Gastrocnemius medialis (tissue), 4 donors: ENCODE measurements at regions of chr11 and their contacts with region 1.

Region 1: GRCh38 chr11:55263081-55263480 is 1.1 kb downstream of the TRIM48 start:
- DNase-seq: no peak
- ATAC-seq: no peak
- H3K4me3 ChIP-seq: no peak overlapping the region
- H3K27ac ChIP-seq: no peak overlapping the region
- H3K4me1 ChIP-seq: no peaks in the 10 kb centered on the region
- H3K27me3 ChIP-seq: no peaks in the 10 kb centered on the region
- CTCF ChIP-seq: no peak
- POLR2A ChIP-seq: no peak

Region 2: DNA sequence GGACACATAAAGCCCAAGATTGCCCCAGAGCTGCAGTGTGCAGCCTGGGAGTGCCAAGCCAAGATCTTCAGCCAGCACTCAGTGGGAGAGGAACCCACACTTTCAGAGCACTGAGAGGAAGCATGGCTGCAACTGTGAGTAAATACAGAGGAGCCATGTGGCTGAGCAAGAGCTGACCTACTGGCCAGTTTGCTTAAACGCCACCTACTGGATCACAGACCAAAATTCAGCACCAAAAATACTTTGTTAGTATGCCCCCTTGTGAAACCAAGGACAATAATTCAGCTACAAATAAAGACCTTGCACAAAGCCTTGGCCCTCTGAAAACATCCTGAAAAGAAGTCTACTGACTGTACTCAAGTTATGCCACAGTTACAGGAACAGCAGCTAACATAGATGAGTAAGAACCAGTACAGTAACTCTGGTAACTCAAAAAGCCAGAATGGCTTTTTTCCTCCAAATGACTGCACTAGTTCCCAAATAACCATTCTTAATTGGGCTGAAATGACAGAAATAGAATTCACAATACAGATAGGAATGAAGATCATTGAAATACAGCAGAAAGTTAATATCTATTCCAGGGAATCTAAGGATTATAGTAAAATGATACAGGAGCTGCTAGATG is 94.6 kb after region 1 on chr11:
- in situ Hi-C with region 1: loop called in 1 of 4 experiments (anchors 25 kb)
- intact Hi-C with region 1: no loop called
- DNase-seq: no peak
- ATAC-seq: no peak
- H3K4me3 ChIP-seq: no peak overlapping the region
- H3K27ac ChIP-seq: no peak overlapping the region
- H3K4me1 ChIP-seq: no peaks in the 10 kb centered on the region
- H3K27me3 ChIP-seq: no peaks in the 10 kb centered on the region
- CTCF ChIP-seq: no peak
- POLR2A ChIP-seq: no peak